ENCODE measurements at regions of chr2 and their contacts with region 1.

Region 1: GRCh38 chr2:37052600-37053332 is 31.4 kb downstream of the HEATR5B start:
- DNase-seq: no peak

Region 2: GRCh38 chr2:36193680-36194079 is 859.1 kb before region 1 on chr2:
- intact Hi-C with region 1: no loop called
- DNase-seq: no peak

Region 3: GRCh38 chr2:36993841-36994620 is 58.7 kb before region 1 on chr2:
- intact Hi-C with region 1: loop called in 1 of 2 experiments (anchors 2 kb)
- DNase-seq: no peak

Measured in posterior vena cava (tissue), 2 donors.